ENCODE measurements at regions of chr20 and their contacts with region 1.

Region 1: GRCh38 chr20:63980806-63981728 is at the start of gene PRPF6:
- DNase-seq: peak; percentile 97
- H3K4me3 Mint-ChIP-seq: peak within 1 kb of the TSS; percentile 84
- H3K27ac Mint-ChIP-seq: peak within 1 kb of the TSS; percentile 94
- H3K4me1 Mint-ChIP-seq: peaks cover 52% of the 10 kb centered on the region
- H3K27me3 Mint-ChIP-seq: no peaks in the 10 kb centered on the region
- total RNA-seq, gene PRPF6: 39.4 to 40.2 TPM

Region 2: GRCh38 chr20:63216041-63216848 is 764.8 kb before region 1 on chr20 and contains the start of gene YTHDF1:
- CTCF ChIA-PET with region 1: no interaction called
- intact Hi-C with region 1: loop called (anchors 10 kb)
- DNase-seq: peak; percentile 97
- H3K4me3 Mint-ChIP-seq: peak within 1 kb of the TSS; percentile 94
- H3K27ac Mint-ChIP-seq: peak within 1 kb of the TSS; percentile 87
- H3K4me1 Mint-ChIP-seq: peaks cover 47% of the 10 kb centered on the region
- H3K27me3 Mint-ChIP-seq: no peaks in the 10 kb centered on the region
- total RNA-seq, gene YTHDF1: 27.6 to 27.8 TPM

Region 3: GRCh38 chr20:63858393-63859165 is 122.5 kb before region 1 on chr20:
- CTCF ChIA-PET with region 1: no interaction called
- intact Hi-C with region 1: no loop called
- DNase-seq: no peak
- H3K4me3 Mint-ChIP-seq: no peak overlapping the region
- H3K27ac Mint-ChIP-seq: no peak overlapping the region
- H3K4me1 Mint-ChIP-seq: peaks cover 32% of the 10 kb centered on the region
- H3K27me3 Mint-ChIP-seq: no peaks in the 10 kb centered on the region

Region 4: GRCh38 chr20:63903796-63904561 is 77.1 kb before region 1 on chr20:
- CTCF ChIA-PET with region 1: no interaction called
- intact Hi-C with region 1: loop called (anchors 2 kb)
- DNase-seq: no peak
- H3K4me3 Mint-ChIP-seq: no peak overlapping the region
- H3K27ac Mint-ChIP-seq: peak overlapping the region; percentile 48
- H3K4me1 Mint-ChIP-seq: peaks cover 52% of the 10 kb centered on the region
- H3K27me3 Mint-ChIP-seq: no peaks in the 10 kb centered on the region

Region 5: DNA sequence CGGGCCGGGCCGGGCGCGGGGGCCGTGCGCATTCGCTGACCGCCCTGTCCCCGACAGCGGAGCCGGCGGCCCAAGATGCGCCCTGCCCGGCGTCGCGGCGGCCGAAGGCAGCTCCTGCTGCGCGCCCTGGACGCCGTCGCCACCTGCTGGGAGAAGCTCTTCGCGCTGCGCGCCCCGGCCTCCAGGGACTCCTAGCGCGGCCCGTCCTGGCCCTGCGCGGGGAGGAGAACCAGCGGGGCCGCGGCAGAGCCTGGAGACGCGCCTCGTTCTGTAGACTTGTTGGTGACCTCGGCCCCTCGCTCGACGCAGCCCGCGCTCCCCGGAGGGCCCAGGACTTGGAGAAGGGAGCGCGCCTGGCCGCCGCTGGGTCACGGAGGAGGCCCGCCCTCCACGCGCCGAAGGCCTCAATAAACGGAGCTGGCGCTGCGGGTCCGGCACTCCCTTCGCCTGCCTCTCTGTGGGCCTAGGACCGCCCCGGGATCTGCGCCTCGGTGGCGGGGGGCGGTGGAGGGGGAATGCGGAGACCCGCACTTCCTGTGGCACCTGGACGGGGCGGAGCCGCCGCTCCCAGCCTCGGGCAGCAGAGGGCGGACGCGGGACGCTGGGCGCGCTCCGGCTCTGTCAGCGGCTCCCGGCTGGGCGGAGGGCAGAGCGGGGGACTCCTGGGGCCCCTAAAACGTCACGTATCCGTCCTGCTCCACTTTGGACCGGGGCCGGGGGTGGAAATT is 57.7 kb after region 1 on chr20:
- CTCF ChIA-PET with region 1: interaction called, 33 read pairs
- intact Hi-C with region 1: loop called (anchors 1 kb)
- DNase-seq: peak; percentile 84
- H3K4me3 Mint-ChIP-seq: peak overlapping the region; percentile 67
- H3K27ac Mint-ChIP-seq: no peak overlapping the region
- H3K4me1 Mint-ChIP-seq: peaks cover 53% of the 10 kb centered on the region
- H3K27me3 Mint-ChIP-seq: peaks cover 2% of the 10 kb centered on the region

Region 6: DNA sequence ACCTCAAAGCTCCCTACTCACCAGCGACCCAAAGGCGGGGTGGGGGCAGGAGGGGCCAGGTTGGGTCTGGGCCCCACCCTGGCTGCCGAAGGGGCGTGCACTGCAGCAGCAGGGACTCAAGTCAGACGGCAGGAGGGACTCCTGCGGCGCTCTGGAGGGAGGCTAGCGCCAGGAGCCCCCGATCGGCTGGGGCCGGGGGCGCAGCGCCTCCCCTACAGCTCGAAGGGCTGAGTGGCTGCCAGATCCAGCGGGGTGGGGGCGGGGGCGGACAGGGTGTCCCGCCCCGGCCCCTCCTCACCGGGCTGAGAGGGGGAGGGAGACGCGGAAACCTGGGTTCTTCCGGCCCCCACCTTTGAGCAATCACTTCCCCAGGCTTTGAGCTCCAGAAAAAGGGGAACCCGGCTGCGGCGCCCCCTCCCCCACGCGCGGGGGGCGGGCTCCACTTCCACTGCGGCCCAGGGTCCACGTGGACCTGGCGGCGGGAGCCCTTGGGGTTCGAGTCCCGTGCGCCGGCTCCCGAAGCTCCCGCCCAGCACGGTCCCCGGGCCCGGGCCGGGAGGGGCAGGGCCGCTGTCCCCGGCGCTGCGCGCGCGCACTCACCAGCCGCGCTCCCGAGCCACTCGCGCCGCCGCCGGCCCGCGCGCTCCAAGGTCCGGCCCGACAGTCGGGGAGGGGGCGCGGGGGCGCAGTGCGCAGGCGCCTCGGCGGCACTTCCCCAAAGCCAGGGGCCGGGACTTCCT is 98.4 kb after region 1 on chr20 and contains the start of gene RGS19:
- CTCF ChIA-PET with region 1: interaction called, 6 read pairs
- intact Hi-C with region 1: loop called (anchors 2 kb)
- DNase-seq: peak; percentile 73
- H3K4me3 Mint-ChIP-seq: peak within 1 kb of the TSS; percentile 87
- H3K27ac Mint-ChIP-seq: peak within 1 kb of the TSS; percentile 82
- H3K4me1 Mint-ChIP-seq: peaks cover 38% of the 10 kb centered on the region
- H3K27me3 Mint-ChIP-seq: peaks cover 3% of the 10 kb centered on the region
- total RNA-seq, gene RGS19: 20.6 to 23.5 TPM